Calu3 (cell line): ENCODE measurements at regions of chr17 and their contacts with region 1.

Region 1: DNA sequence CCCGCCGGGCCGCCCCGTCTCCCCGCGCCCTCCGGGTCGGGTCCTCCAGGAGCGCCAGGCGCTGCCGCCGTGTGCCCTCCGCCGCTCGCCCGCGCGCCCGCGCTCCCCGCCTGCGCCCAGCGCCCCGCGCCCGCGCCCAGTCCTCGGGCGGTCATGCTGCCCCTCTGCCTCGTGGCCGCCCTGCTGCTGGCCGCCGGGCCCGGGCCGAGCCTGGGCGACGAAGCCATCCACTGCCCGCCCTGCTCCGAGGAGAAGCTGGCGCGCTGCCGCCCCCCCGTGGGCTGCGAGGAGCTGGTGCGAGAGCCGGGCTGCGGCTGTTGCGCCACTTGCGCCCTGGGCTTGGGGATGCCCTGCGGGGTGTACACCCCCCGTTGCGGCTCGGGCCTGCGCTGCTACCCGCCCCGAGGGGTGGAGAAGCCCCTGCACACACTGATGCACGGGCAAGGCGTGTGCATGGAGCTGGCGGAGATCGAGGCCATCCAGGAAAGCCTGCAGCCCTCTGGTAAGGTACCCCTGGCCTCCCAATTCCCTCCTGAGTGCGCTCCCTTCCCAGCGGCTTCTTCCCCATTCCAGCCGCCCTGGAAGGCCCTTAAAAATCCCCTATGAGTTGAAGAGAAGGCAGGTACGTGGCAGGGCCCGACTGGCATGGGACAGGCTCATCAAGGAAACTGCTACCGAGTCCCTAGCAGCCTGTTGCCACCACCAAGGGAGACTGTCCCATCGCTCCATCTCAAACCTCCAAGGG is 505 bp downstream of the IGFBP4 start:
- DNase-seq: peak; percentile 100
- H3K4me3 Mint-ChIP-seq: peak overlapping the region; percentile 1
- H3K27ac Mint-ChIP-seq: no peak overlapping the region
- H3K4me1 Mint-ChIP-seq: peaks cover 35% of the 10 kb centered on the region
- H3K27me3 Mint-ChIP-seq: peaks cover 37% of the 10 kb centered on the region
- CTCF ChIP-seq: no peak

Region 2: DNA sequence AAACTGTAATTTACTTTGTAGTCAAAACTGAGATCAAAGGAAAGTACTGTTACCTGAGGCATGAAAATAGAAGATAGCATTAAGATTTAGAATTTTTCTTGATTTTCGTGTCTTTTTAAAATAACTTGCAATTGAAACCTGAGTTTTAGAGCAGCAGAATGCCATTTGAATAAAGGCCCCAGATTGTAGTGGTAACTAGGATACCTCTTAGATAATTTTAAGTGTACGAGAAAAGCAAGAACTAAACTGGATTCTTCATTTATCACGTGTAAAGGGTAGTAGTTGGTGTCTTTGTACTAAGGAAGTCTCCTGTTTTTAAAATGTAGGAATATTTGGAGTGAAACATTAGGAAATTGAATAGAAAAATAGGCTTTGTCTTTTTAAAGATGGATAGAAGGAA is 194.7 kb before region 1 on chr17:
- CTCF ChIA-PET with region 1: no interaction called
- intact Hi-C with region 1: no loop called
- DNase-seq: no peak
- H3K4me3 Mint-ChIP-seq: no peak overlapping the region
- H3K27ac Mint-ChIP-seq: peak overlapping the region; percentile 3
- H3K4me1 Mint-ChIP-seq: peaks cover 36% of the 10 kb centered on the region
- H3K27me3 Mint-ChIP-seq: no peaks in the 10 kb centered on the region
- CTCF ChIP-seq: no peak

Region 3: GRCh38 chr17:40387680-40388079 is 56.1 kb before region 1 on chr17:
- CTCF ChIA-PET with region 1: no interaction called
- intact Hi-C with region 1: no loop called
- DNase-seq: no peak
- H3K4me3 Mint-ChIP-seq: no peak overlapping the region
- H3K27ac Mint-ChIP-seq: no peak overlapping the region
- H3K4me1 Mint-ChIP-seq: no peaks in the 10 kb centered on the region
- H3K27me3 Mint-ChIP-seq: no peaks in the 10 kb centered on the region
- CTCF ChIP-seq: no peak

Region 4: GRCh38 chr17:40480501-40481003 is 36.8 kb after region 1 on chr17:
- CTCF ChIA-PET with region 1: interaction called, 1,658 read pairs
- intact Hi-C with region 1: loop called (anchors 1 kb)
- DNase-seq: peak; percentile 91
- H3K4me3 Mint-ChIP-seq: no peak overlapping the region
- H3K27ac Mint-ChIP-seq: no peak overlapping the region
- H3K4me1 Mint-ChIP-seq: peaks cover 25% of the 10 kb centered on the region
- H3K27me3 Mint-ChIP-seq: peaks cover 36% of the 10 kb centered on the region
- CTCF ChIP-seq: no peak

Region 5: DNA sequence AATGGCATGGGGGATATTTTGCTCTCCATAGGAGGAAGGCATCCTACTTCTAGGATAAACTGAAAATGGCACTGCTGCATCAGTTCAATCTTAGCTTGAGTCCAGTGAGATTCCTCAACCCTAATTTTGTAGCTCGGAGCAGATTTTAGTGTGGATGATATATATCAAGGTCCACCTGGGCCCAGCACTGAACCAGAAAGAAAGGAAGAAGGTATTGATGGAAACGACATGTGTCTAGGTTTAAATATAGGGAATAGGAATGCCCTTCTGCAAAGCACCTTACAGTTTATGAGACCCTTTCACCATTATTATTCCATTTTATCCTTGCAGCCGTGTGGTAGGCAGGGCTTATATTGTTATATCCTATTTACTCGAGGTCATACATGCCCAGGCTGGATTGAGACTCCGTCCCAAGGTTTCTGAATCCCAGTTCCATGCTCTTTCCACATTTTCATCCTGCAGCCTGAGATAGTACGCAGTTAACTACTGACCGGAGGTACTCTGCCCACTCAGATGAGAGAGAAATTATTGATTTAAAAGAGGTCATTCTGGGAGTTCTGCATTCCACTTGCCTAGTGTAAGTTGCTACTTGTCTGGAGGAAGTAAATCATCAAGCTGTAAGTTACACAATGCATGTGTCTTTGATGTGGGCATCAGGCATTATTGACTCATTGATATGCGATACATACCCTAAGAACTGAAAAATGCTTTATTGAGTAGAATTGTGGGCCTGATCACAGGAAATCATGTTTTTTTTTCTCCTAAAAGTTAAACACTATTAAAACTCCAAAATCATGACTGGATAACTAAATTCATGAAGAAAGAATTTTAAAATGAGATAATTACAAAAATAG is 512.9 kb after region 1 on chr17:
- CTCF ChIA-PET with region 1: no interaction called
- intact Hi-C with region 1: no loop called
- DNase-seq: peak; percentile 88
- H3K4me3 Mint-ChIP-seq: peak overlapping the region; percentile 27
- H3K27ac Mint-ChIP-seq: peak overlapping the region; percentile 94
- H3K4me1 Mint-ChIP-seq: peaks cover 97% of the 10 kb centered on the region
- H3K27me3 Mint-ChIP-seq: no peaks in the 10 kb centered on the region
- CTCF ChIP-seq: no peak